ENCODE measurements at regions of chr14 and their contacts with region 1.

Region 1: GRCh38 chr14:37972941-37973887 is 234.5 kb upstream of the SSTR1 start:
- DNase-seq: no peak
- H3K4me3 ChIP-seq: no peak overlapping the region
- H3K27ac ChIP-seq: no peak overlapping the region
- H3K4me1 ChIP-seq: no peaks in the 10 kb centered on the region
- H3K27me3 ChIP-seq: no peaks in the 10 kb centered on the region
- CTCF ChIP-seq: no peak
- POLR2A ChIP-seq: no peak

Region 2: DNA sequence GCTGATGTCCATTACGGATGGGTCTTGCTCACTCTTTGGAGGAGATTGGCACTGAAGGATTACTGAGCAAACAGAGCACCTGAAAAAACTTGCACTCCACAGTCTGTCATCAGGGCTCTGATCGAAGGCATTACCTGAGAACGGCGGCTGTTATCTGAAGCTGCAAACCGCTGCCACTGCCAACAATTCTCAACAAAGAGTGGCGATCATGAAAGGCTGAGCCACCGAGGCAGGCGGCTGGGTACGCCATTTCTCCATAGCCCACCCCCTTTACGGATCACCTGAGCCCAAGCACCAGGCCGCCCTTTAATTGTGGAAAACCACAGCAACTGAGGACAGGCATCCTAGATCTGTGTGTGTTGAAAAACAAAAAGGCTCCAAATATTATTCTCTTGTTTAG is 1185.0 kb before region 1 on chr14:
- intact Hi-C with region 1: loop called (anchors 5 kb)
- DNase-seq: no peak
- H3K4me3 ChIP-seq: no peak overlapping the region
- H3K27ac ChIP-seq: no peak overlapping the region
- H3K4me1 ChIP-seq: no peaks in the 10 kb centered on the region
- H3K27me3 ChIP-seq: no peaks in the 10 kb centered on the region
- CTCF ChIP-seq: no peak
- POLR2A ChIP-seq: no peak

Measured in breast epithelium (tissue), 4 donors.